CD4-positive, alpha-beta memory T cell (primary cell): ENCODE measurements at regions of chr16 and their contacts with region 1.

Region 1: DNA sequence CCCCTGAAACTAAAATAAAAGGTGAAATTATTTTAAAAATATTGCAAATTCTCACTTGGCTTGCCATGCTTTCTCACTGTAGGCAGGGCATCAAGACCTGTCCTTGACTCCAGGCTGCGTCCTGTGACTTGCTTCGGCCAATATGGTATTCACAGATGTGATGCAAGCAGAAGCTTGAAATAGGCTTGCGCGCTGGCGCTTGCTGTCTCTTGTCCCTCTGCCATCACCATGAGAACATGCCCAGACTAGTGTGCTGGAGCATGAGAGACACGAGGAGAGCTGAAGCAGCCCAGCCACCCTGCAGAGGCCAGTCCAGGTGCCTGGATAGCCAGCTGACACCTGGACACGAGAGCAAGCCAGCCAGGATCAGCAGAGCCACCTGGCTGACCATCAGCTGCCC is 21.8 kb upstream of the ZKSCAN2 start:
- DNase-seq: no peak
- H3K4me3 ChIP-seq: no peak overlapping the region
- H3K4me3 Mint-ChIP-seq: no peak overlapping the region
- H3K27ac ChIP-seq: no peak overlapping the region
- H3K27ac Mint-ChIP-seq: no peak overlapping the region
- H3K4me1 ChIP-seq: no peaks in the 10 kb centered on the region
- H3K4me1 Mint-ChIP-seq: peaks cover 0 to 4% (median under 1%) of the 10 kb centered on the region in 4 donors
- H3K27me3 ChIP-seq: no peaks in the 10 kb centered on the region
- H3K27me3 Mint-ChIP-seq: peaks cover 0 to 3% of the 10 kb centered on the region in 2 donors

Region 2: GRCh38 chr16:25291580-25291979 is 12.1 kb after region 1 on chr16:
- CTCF ChIA-PET with region 1: interaction called, 11 read pairs
- POLR2A ChIA-PET with region 1: no interaction called
- intact Hi-C with region 1: no loop called
- DNase-seq: no peak
- H3K4me3 ChIP-seq: no peak overlapping the region
- H3K4me3 Mint-ChIP-seq: no peak overlapping the region
- H3K27ac ChIP-seq: no peak overlapping the region
- H3K27ac Mint-ChIP-seq: no peak overlapping the region
- H3K4me1 ChIP-seq: no peaks in the 10 kb centered on the region
- H3K4me1 Mint-ChIP-seq: peaks cover 0 to 2% (median under 1%) of the 10 kb centered on the region in 4 donors
- H3K27me3 ChIP-seq: no peaks in the 10 kb centered on the region
- H3K27me3 Mint-ChIP-seq: peaks cover 0 to 2% of the 10 kb centered on the region in 2 donors

Region 3: GRCh38 chr16:25699069-25699468 is 419.6 kb after region 1 on chr16:
- CTCF ChIA-PET with region 1: no interaction called
- POLR2A ChIA-PET with region 1: no interaction called
- intact Hi-C with region 1: no loop called
- DNase-seq: no peak
- H3K4me3 ChIP-seq: no peak overlapping the region
- H3K4me3 Mint-ChIP-seq: no peak overlapping the region
- H3K27ac ChIP-seq: no peak overlapping the region
- H3K27ac Mint-ChIP-seq: no peak overlapping the region
- H3K4me1 ChIP-seq: no peaks in the 10 kb centered on the region
- H3K4me1 Mint-ChIP-seq: peaks cover 0 to under 1% (median under 1%) of the 10 kb centered on the region in 4 donors
- H3K27me3 ChIP-seq: no peaks in the 10 kb centered on the region
- H3K27me3 Mint-ChIP-seq: peaks cover 24 to 26% of the 10 kb centered on the region in 2 donors